ENCODE measurements at regions of chr17 and their contacts with region 1.

Region 1: DNA sequence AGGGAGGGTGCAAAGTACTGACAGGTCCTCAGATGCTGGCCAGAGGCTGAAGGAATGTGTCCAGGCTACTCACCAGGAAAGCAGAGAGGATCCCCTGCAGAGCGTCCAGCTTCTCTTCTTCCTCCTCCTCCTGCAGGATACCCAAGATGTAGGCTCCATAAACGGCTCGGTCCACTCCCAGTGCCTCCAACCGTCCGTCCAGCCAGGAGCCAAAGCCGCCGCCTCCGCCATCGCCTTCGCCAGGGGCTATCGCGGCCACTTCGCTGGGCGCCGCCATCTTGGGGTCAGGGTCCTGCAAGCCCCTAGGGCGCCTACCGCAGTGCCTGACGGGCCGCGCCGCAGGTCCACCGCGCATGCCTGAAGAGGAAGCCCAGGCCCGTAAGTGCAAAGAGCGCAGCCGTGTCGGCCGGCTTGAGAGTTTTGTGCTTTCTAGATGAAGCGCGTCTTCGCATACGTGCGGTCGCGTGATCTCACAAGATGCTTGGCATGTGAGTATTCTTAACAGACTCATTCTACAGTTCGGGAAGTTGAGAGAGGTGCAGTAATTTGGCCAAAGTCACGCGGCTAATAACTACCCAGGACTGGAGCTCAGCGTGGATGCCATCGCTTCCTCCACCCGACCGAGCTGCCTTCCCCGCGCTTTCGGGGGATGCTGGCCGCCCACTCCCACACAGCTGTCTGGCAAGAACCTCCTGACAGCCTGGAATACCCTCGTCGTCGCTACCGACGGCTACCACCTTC is at the start of gene CCDC43:
- DNase-seq: peak; percentile 37
- H3K4me3 ChIP-seq: peak within 1 kb of the TSS; percentile 61 to 81 (median 78)
- H3K27ac ChIP-seq: peak within 1 kb of the TSS; percentile 76 to 89 (median 84)
- H3K4me1 ChIP-seq: peaks cover 5 to 33% (median 8%) of the 10 kb centered on the region in 3 donors
- H3K27me3 ChIP-seq: no peaks in the 10 kb centered on the region
- CTCF ChIP-seq: peak in 1 of 6 experiments; percentile 7
- POLR2A ChIP-seq: peak in 2 of 4 donors; percentile 24 to 55
- total RNA-seq, gene CCDC43: 10.2 to 23.0 (median 19.7) TPM

Region 2: GRCh38 chr17:44628243-44629188 is 61.1 kb before region 1 on chr17:
- intact Hi-C with region 1: loop called (anchors 10 kb)
- DNase-seq: no peak
- H3K4me3 ChIP-seq: peak overlapping the region in 3 of 4 donors; percentile 9 to 40 (median 22)
- H3K27ac ChIP-seq: peak overlapping the region in 3 of 4 donors; percentile 18 to 40 (median 39)
- H3K4me1 ChIP-seq: peaks cover 0 to 11% (median 0%) of the 10 kb centered on the region in 3 donors
- H3K27me3 ChIP-seq: peaks cover 0 to 7% (median 0%) of the 10 kb centered on the region in 4 donors
- CTCF ChIP-seq: no peak
- POLR2A ChIP-seq: no peak

Measured in esophagus squamous epithelium (tissue), 5 donors.